H1 (cell line): ENCODE measurements at regions of chr1 and their contacts with region 1.

Region 1: GRCh38 chr1:5651964-5652821 is 340.0 kb downstream of the NPHP4 start:
- DNase-seq: no peak
- H3K4me3 ChIP-seq: 0 out of 8 replicates have a peak overlapping the region, but pooled peaks of 1 of the 4 experiments have one; percentile 9
- H3K27ac ChIP-seq: no peak overlapping the region
- H3K4me1 ChIP-seq: peaks cover 0 to 5% (median 2%) of the 10 kb centered on the region in 4 experiments; a peak in 3 of 7 replicates
- H3K27me3 ChIP-seq: peaks cover 0 to 4% (median 0%) of the 10 kb centered on the region in 4 experiments; a peak in 1 of 7 replicates
- CTCF ChIP-seq: no peak
- EP300 ChIP-seq: no peak
- POLR2A ChIP-seq: no peak
- RAD21 ChIP-seq: no peak

Region 2: GRCh38 chr1:5637171-5637570 is 15.0 kb before region 1 on chr1:
- CTCF ChIA-PET with region 1: interaction called, 15 read pairs
- POLR2A ChIA-PET with region 1: interaction called, 3 read pairs
- DNase-seq: no peak
- H3K4me3 ChIP-seq: no peak overlapping the region
- H3K27ac ChIP-seq: no peak overlapping the region
- H3K4me1 ChIP-seq: 0 out of 7 replicates have a peak, but pooled peaks cover 0 to 2% (median 0%) of the 10 kb centered on the region in 4 experiments
- H3K27me3 ChIP-seq: no peaks in the 10 kb centered on the region
- CTCF ChIP-seq: peak; percentile 51 to 66 (median 58)
- EP300 ChIP-seq: no peak
- POLR2A ChIP-seq: no peak
- RAD21 ChIP-seq: peak; percentile 55 to 67

Region 3: DNA sequence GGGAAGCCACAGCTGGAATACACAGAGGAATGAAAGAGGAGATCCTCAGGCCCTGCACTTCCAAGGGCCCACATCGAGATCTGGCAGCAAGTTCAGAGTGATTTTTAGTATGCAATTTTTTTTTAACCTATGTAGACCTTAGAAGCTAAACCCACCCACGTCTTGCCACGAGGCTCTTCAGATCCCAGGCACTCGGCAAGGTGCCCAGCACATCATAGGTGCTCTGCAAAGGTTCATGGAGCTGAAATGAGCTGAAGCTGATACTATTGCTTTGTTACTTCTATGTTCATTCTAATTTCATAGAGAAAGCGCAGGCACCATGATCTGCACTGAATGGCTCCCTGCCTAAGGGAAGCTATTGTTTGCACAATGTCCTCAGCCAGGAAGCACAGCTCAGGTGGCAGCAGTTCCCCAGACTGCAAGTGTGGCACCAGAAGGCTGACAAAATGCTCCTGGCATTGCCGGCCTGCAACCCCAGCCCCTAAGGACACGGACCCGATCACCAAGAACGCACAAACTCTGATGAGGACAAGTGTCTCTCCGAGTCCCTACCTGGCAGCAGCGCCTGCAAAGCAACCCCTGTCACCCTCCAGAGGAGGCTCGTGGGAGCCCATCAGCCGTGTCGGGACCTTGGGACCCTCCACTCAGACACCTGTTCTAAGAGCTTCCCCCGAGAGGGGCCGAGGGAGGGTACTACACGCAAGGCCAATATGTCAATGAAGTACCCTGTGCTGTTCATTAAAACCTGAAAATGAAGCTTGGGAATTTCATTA is 75.9 kb after region 1 on chr1:
- CTCF ChIA-PET with region 1: no interaction called
- POLR2A ChIA-PET with region 1: no interaction called
- DNase-seq: no peak
- H3K4me3 ChIP-seq: no peak overlapping the region
- H3K27ac ChIP-seq: no peak overlapping the region
- H3K4me1 ChIP-seq: peaks cover 0 to 2% (median 0%) of the 10 kb centered on the region in 4 experiments; a peak in 1 of 7 replicates
- H3K27me3 ChIP-seq: no peaks in the 10 kb centered on the region; a peak in 1 of 7 replicates
- CTCF ChIP-seq: no peak
- EP300 ChIP-seq: no peak
- POLR2A ChIP-seq: no peak
- RAD21 ChIP-seq: no peak